ENCODE measurements at regions of chr2 and their contacts with region 1.

Region 1: GRCh38 chr2:181742922-181743722 is 62.8 kb upstream of the NEUROD1 start:
- DNase-seq: no peak
- ATAC-seq: peak in 2 of 4 donors; percentile 40 to 72
- H3K4me3 ChIP-seq: no peak overlapping the region
- H3K27ac ChIP-seq: no peak overlapping the region
- H3K4me1 ChIP-seq: no peaks in the 10 kb centered on the region
- H3K27me3 ChIP-seq: no peaks in the 10 kb centered on the region
- CTCF ChIP-seq: peak; percentile 72

Region 2: DNA sequence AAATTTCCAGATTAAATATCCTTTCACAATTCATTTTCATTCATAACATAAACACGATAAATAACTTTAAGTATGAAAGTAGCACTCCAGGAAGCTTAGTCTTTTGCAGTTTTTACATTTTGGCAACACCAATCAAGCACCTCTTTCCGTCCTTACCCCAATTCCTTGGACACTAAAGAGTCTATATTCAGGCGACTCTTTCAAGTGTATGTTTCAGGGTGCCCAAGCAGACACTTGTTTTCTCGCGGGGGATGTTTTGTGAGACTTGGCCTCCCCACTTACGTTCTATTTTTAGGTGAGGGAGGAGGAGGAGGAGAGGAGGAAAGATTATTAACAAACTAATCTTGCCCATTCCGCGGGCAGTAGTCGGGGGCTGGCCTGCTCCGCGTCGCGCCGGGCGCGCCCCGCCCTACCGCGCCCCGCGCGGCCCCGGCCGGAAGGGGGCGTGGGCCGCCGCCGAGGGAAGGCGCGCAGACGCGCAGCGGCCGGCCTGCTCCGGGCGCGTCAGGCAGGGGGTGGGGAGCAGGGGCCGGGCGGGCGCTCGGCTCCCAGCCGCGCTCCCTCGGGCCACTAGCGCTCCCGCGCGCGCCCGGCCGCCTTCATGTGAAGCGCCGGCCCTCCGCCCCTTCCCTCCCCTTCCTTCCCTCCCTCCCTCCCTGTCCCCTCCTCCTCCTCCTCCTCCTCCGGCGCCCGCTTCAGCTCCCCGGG is 148.3 kb after region 1 on chr2 and contains the start of gene ITPRID2:
- intact Hi-C with region 1: loop called in 1 of 2 experiments (anchors 10 kb)
- DNase-seq: peak; percentile 89 to 91
- ATAC-seq: peak; percentile 90 to 96 (median 95)
- H3K4me3 ChIP-seq: peak within 1 kb of the TSS; percentile 89
- H3K27ac ChIP-seq: peak within 1 kb of the TSS; percentile 98
- H3K4me1 ChIP-seq: peaks cover 33% of the 10 kb centered on the region
- H3K27me3 ChIP-seq: no peaks in the 10 kb centered on the region
- CTCF ChIP-seq: peak; percentile 49
- total RNA-seq, gene ITPRID2: 46.0 to 73.3 (median 65.9) TPM

Region 3: GRCh38 chr2:181904022-181904632 is 161.0 kb after region 1 on chr2:
- intact Hi-C with region 1: loop called (anchors 2 to 10 kb)
- DNase-seq: no peak
- ATAC-seq: no peak
- H3K4me3 ChIP-seq: no peak overlapping the region
- H3K27ac ChIP-seq: no peak overlapping the region
- H3K4me1 ChIP-seq: no peaks in the 10 kb centered on the region
- H3K27me3 ChIP-seq: no peaks in the 10 kb centered on the region
- CTCF ChIP-seq: peak; percentile 46

Region 4: DNA sequence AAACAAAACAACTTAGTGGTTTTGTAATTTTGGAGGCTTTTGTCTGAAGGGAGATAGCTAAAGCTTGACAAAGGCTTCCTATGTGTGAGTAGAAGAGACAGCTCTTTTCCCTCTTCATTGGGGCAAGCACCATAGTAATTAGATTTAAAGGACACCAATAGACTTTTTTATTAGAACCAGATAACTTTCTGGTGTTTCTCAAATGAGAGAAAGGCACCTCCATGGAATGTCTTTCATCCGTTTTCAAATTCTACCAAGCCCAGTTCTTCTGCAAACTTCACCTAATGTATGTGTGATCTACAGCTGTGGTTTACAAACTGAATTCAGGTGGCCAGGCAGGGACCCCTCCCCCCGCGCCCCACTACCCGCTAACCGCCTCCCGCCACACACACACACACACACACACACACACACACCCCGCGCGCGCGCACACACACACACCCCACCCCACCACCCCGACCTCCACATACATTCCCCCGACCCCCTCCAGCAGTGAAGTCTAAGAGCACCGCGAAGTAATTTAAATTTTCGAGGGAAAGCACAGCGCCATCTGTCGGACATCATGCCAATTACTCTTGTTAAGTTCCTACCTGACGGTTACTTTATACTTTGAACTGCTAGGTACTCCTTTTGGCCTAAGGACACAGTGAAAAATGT is 210.9 kb after region 1 on chr2:
- intact Hi-C with region 1: loop called (anchors 2 to 10 kb)
- DNase-seq: peak; percentile 23 to 58
- ATAC-seq: peak; percentile 46 to 76 (median 66)
- H3K4me3 ChIP-seq: peak overlapping the region; percentile 13
- H3K27ac ChIP-seq: no peak overlapping the region
- H3K4me1 ChIP-seq: no peaks in the 10 kb centered on the region
- H3K27me3 ChIP-seq: no peaks in the 10 kb centered on the region
- CTCF ChIP-seq: peak; percentile 57

Region 5: GRCh38 chr2:182077451-182078142 is 334.5 kb after region 1 on chr2:
- intact Hi-C with region 1: loop called (anchors 5 kb)
- DNase-seq: no peak
- ATAC-seq: peak; percentile 49 to 84 (median 65)
- H3K4me3 ChIP-seq: no peak overlapping the region
- H3K27ac ChIP-seq: no peak overlapping the region
- H3K4me1 ChIP-seq: no peaks in the 10 kb centered on the region
- H3K27me3 ChIP-seq: no peaks in the 10 kb centered on the region
- CTCF ChIP-seq: peak; percentile 66